Common myeloid progenitor, CD34-positive (primary cell): ENCODE measurements at regions of chr15 and their contacts with region 1.

Region 1: GRCh38 chr15:50241684-50242450 is 23.7 kb downstream of the HDC start:
- DNase-seq: peak in 1 of 3 donors; percentile 19
- H3K4me3 ChIP-seq: no peak overlapping the region
- H3K27ac ChIP-seq: no peak overlapping the region
- H3K4me1 ChIP-seq: peaks cover 0 to 7% (median 0%) of the 10 kb centered on the region in 4 experiments
- H3K27me3 ChIP-seq: no peaks in the 10 kb centered on the region

Region 2: DNA sequence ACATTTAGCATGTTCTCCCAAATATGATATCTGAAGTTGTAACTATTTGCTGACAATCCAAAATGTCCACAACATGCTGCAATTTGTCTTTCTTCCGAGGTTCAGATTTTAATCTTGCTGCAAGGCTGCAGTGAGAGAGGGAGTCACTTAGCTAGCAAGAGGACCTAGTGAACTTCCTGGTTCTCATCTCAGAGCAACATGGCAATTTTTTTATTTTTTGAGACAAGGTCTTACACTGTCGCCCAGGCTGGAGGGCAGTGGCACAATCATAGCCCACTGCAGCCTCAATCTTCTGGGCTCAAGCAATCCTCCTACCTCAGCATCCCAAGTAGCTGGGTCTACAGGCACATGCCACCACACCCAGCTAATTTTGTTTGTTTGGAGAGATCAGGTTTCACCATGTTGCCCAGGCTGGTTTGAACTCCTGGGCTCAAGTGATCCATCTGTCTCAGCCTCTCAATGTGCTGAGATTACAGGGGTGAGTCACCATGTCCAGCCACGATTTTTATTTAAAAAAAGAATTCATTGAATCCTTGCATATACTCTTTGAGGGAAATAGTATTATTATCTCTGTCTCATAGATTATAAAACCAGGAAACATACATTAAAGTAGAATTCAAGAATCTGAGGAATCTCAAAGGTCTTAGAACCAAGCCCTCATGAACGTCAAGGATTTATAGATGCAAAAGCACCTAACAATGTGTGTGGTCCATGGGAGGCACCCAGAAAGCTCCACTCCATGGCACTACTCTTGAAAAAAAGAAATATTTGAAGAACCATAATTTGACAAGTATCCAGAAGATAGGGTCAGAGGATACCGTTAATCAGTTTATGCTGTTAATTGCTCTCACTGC is 14.5 kb after region 1 on chr15:
- CTCF ChIA-PET with region 1: interaction called, 16 read pairs
- POLR2A ChIA-PET with region 1: interaction called, 7 read pairs
- DNase-seq: peak in 2 of 3 donors; percentile 14 to 48
- H3K4me3 ChIP-seq: no peak overlapping the region
- H3K27ac ChIP-seq: no peak overlapping the region
- H3K4me1 ChIP-seq: peaks cover 27 to 37% (median 35%) of the 10 kb centered on the region in 4 experiments
- H3K27me3 ChIP-seq: no peaks in the 10 kb centered on the region